Activated CD4-positive, alpha-beta T cell treated with anti-CD3 and anti-CD28 coated beads, Interleukin-2, amount 10 ng/mL, durations not matched to agents 24 days and 14 days (primary cell): ENCODE measurements at regions of chr1 and their contacts with region 1.

Region 1: GRCh38 chr1:40742363-40743061 is 41.1 kb upstream of the KCNQ4 start:
- DNase-seq: no peak
- H3K4me3 Mint-ChIP-seq: peak overlapping the region; percentile 2
- H3K27ac Mint-ChIP-seq: peak overlapping the region; percentile 77
- H3K4me1 Mint-ChIP-seq: peaks cover 45% of the 10 kb centered on the region
- H3K27me3 Mint-ChIP-seq: no peaks in the 10 kb centered on the region

Region 2: GRCh38 chr1:40691538-40692428 is 50.7 kb before region 1 on chr1 and contains the start of gene NFYC:
- intact Hi-C with region 1: loop called (anchors 5 kb)
- DNase-seq: peak; percentile 99
- H3K4me3 Mint-ChIP-seq: peak within 1 kb of the TSS; percentile 96
- H3K27ac Mint-ChIP-seq: peak within 1 kb of the TSS; percentile 99
- H3K4me1 Mint-ChIP-seq: peaks cover 49% of the 10 kb centered on the region
- H3K27me3 Mint-ChIP-seq: no peaks in the 10 kb centered on the region
- total RNA-seq, gene NFYC: 66.5 and 73.2 TPM in 2 replicates

Region 3: DNA sequence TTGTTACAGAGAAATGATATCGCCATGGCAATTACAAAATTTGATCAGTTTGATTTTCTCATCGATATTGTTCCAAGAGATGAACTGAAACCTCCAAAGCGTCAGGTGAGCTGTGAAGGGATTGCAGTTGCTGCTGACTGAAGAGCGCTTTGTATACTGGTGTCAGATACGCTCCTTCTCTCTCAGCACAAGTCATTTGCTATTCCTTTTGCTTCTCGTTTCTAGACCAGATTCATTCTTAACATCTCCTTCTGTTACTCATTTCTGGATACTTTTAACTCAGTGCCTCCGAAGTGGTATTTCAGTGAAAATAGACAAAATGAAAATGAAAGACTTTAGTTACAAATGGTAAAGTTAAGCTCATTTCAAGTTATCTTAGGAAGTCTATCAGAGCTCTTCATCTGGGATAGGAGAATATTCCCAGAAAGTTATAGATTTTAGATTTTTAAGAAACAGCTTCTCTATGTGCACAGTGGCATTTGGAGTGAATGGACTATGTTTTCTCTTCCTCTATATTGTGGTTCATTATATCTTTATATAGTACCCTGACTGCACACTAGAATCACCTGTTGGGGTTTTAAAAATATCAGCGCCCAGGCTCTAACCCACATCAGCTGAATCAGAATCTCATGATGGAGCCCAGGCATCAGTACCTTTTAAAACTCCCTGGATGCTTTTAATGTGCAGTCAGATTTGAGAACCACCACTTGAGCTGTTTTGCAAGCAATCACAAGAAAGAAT is 10.8 kb after region 1 on chr1:
- intact Hi-C with region 1: loop called (anchors 1 kb)
- DNase-seq: no peak
- H3K4me3 Mint-ChIP-seq: peak overlapping the region; percentile 65
- H3K27ac Mint-ChIP-seq: peak overlapping the region; percentile 86
- H3K4me1 Mint-ChIP-seq: peaks cover 26% of the 10 kb centered on the region
- H3K27me3 Mint-ChIP-seq: no peaks in the 10 kb centered on the region